HepG2 (cell line): ENCODE measurements at regions of chrX and their contacts with region 1.

Region 1: GRCh38 chrX:132609394-132609793 is 120.6 kb upstream of the MBNL3 start:
- DNase-seq: no peak
- ATAC-seq: no peak
- H3K4me3 ChIP-seq: no peak overlapping the region
- H3K27ac ChIP-seq: no peak overlapping the region
- H3K4me1 ChIP-seq: peaks cover 55% of the 10 kb centered on the region
- H3K27me3 ChIP-seq: no peaks in the 10 kb centered on the region
- CTCF ChIP-seq: no peak
- EP300 ChIP-seq: no peak
- POLR2A ChIP-seq: no peak
- RAD21 ChIP-seq: no peak

Region 2: GRCh38 chrX:132401935-132402334 is 207.5 kb before region 1 on chrX:
- CTCF ChIA-PET with region 1: no interaction called
- POLR2A ChIA-PET with region 1: no interaction called
- in situ Hi-C with region 1: loop called (anchors 10 kb)
- intact Hi-C with region 1: no loop called
- DNase-seq: peak; percentile 21
- ATAC-seq: no peak
- H3K4me3 ChIP-seq: no peak overlapping the region
- H3K27ac ChIP-seq: no peak overlapping the region
- H3K4me1 ChIP-seq: peaks cover 57% of the 10 kb centered on the region
- H3K27me3 ChIP-seq: no peaks in the 10 kb centered on the region
- CTCF ChIP-seq: no peak
- EP300 ChIP-seq: no peak
- POLR2A ChIP-seq: no peak
- RAD21 ChIP-seq: no peak